ENCODE measurements at regions of chr11 and their contacts with region 1.

Region 1: GRCh38 chr11:83819933-83820549 is 533.9 kb upstream of the CCDC90B start:
- DNase-seq: peak; percentile 65
- H3K4me3 ChIP-seq: no peak overlapping the region
- H3K27ac ChIP-seq: no peak overlapping the region
- H3K4me1 ChIP-seq: no peaks in the 10 kb centered on the region
- H3K27me3 ChIP-seq: peaks cover 0 to 2% of the 10 kb centered on the region in 2 experiments
- CTCF ChIP-seq: peak; percentile 18 to 23
- POLR2A ChIP-seq: no peak

Region 2: DNA sequence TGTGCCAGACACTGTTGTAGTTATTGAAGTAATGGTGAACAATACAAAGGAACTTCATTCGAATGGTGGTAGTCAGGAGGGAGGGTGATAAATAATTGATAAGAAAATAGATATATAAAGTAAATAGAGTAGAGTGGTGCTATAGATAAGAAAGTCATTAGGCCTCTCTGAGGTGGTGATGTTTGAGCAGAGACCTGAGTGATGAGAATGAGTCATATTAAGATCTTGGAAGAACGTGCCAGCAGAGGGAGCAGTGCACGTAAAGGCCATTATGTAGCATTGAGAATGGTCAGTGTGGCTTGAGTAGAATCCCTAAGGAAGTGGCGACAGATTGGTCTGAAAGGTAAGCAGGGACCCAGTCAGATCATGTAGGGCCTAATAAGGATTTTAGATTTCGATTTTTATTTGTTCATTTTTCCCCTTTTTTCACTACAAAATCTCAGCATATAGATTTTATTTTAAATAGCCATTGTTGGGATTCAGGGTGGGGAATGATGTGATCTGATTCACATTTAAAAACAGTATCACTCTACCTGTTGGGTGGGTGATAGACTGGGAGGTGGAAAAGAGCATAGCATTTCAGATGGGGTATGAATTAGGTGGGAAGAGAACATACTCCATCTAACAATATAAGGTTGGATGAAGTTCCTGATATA is 578.6 kb before region 1 on chr11:
- CTCF ChIA-PET with region 1: interaction called, 8 read pairs
- POLR2A ChIA-PET with region 1: no interaction called
- dilution Hi-C with region 1: no loop called
- intact Hi-C with region 1: loop called (anchors 1 kb)
- DNase-seq: peak; percentile 74
- H3K4me3 ChIP-seq: no peak overlapping the region
- H3K27ac ChIP-seq: no peak overlapping the region
- H3K4me1 ChIP-seq: no peaks in the 10 kb centered on the region
- H3K27me3 ChIP-seq: no peaks in the 10 kb centered on the region
- CTCF ChIP-seq: peak; percentile 62 to 65
- POLR2A ChIP-seq: no peak

Region 3: GRCh38 chr11:83933008-83933407 is 113.0 kb after region 1 on chr11:
- CTCF ChIA-PET with region 1: no interaction called
- POLR2A ChIA-PET with region 1: no interaction called
- dilution Hi-C with region 1: no loop called
- intact Hi-C with region 1: no loop called
- DNase-seq: no peak
- H3K4me3 ChIP-seq: no peak overlapping the region
- H3K27ac ChIP-seq: no peak overlapping the region
- H3K4me1 ChIP-seq: no peaks in the 10 kb centered on the region
- H3K27me3 ChIP-seq: no peaks in the 10 kb centered on the region
- CTCF ChIP-seq: no peak
- POLR2A ChIP-seq: no peak

Measured in endothelial cell of umbilical vein (primary cell).